ENCODE measurements at regions of chr20 and their contacts with region 1.

Region 1: DNA sequence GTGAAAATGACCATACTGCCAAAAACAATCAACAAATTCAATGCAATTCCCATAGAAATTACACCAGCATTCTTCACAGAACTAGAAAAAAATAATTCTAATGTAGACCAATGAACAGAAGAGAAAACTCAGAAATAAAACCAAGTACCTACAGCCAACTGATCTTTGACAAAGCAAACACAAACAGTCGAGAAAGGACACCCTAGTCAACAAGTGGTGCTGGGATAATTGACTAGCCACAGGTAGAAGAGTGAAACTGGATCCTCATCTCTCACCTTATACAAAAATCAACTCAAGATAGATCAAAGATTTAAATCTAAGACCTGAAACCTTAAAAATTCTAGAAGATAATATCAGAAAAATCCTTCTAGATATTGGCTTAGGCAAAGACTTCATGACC is 44.5 kb upstream of the ZNF133 start:
- DNase-seq: no peak
- H3K4me3 ChIP-seq: no peak overlapping the region
- H3K27ac ChIP-seq: no peak overlapping the region
- H3K4me1 ChIP-seq: no peaks in the 10 kb centered on the region
- H3K27me3 ChIP-seq: no peaks in the 10 kb centered on the region
- CTCF ChIP-seq: no peak

Region 2: DNA sequence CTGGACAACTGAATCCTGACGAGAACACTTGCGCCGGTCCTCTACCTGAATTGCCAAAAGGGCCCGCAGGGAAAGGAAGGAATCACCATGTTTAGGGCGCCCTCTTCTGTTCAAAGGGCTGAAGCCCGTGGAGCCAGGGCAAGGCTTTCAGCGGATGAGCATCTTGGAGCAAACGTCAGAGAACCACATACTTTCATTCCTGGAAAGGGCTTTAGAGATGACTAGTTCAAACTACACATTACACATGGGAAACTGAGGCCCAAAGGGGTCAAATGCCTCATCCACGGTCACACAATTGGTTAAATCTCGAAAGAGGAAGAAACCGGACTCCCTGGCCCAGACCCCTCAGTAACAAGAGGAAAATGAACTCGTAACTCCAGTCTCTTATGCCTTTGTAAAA is 33.0 kb after region 1 on chr20:
- intact Hi-C with region 1: loop called (anchors 1 kb)
- DNase-seq: peak in 1 of 2 donors; percentile 46
- H3K4me3 ChIP-seq: no peak overlapping the region
- H3K27ac ChIP-seq: no peak overlapping the region
- H3K4me1 ChIP-seq: no peaks in the 10 kb centered on the region
- H3K27me3 ChIP-seq: peaks cover 0 to 25% of the 10 kb centered on the region in 2 donors
- CTCF ChIP-seq: peak; percentile 13 to 36

Region 3: GRCh38 chr20:18287915-18288748 is 44.3 kb after region 1 on chr20 and contains the start of gene ZNF133:
- intact Hi-C with region 1: no loop called
- DNase-seq: peak; percentile 95 to 97
- H3K4me3 ChIP-seq: peak within 1 kb of the TSS; percentile 73 to 95
- H3K27ac ChIP-seq: peak within 1 kb of the TSS; percentile 81 to 95
- H3K4me1 ChIP-seq: peaks cover 0 to 21% (median 13%) of the 10 kb centered on the region in 4 donors
- H3K27me3 ChIP-seq: no peaks in the 10 kb centered on the region
- CTCF ChIP-seq: no peak